Activated T-helper 1 cell treated with anti-CD3 and anti-CD28 coated beads, Interleukin-12 subunit alpha, Interleukin-12 subunit beta, Interleukin-2, Interleukin-4 antibody, amounts not matched to agents 30 ng/mL and 10 ng/mL and 1 ng/mL, durations not matched to agents 14 hours and 24 hours and 36 hours (primary cell): ENCODE measurements at regions of chr3 and their contacts with region 1.

Region 1: DNA sequence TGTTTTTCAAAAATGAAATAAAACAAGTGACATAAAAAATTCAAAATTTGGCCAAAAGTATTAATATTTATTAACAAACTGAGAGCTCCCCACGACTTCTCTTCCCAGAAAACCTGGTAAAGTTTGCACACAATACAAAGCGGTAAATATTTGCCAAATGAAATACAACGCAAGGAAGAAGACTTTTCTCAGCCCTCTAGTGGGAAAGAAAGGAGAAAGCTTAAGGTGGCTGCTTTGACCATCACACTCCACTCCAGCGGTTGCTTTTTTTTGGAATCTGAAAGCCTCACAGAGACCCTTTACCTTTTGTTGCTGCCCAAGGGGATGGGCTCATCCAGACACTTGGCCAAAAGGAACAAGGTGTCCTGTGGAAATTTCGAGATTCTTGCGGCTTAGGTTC is 1.1 kb upstream of the GK5 start:
- DNase-seq: no peak
- H3K4me3 Mint-ChIP-seq: peak overlapping the region; percentile 72
- H3K27ac Mint-ChIP-seq: no peak overlapping the region
- H3K4me1 Mint-ChIP-seq: peaks cover 20% of the 10 kb centered on the region
- H3K27me3 Mint-ChIP-seq: no peaks in the 10 kb centered on the region

Region 2: DNA sequence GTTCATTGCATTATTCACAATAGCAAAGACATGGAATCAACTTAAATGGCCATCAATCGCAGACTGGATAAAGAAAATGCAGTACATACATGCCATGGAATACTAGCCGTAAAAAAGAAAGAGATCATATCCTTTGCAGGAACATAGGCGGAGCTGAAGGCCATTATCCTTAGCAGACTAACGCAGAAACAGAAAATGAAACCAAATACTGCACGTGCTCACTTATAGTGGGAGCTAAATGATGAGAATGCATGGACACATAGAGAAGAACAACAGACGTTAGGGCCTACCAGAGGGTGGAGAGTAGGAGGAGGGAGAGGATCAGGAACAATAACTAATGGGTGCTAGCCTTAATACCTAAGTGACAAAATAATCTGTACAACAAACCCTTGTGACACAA is 681.8 kb before region 1 on chr3:
- intact Hi-C with region 1: no loop called
- DNase-seq: peak; percentile 6
- H3K4me3 Mint-ChIP-seq: peak overlapping the region; percentile 67
- H3K27ac Mint-ChIP-seq: peak overlapping the region; percentile 81
- H3K4me1 Mint-ChIP-seq: peaks cover 60% of the 10 kb centered on the region
- H3K27me3 Mint-ChIP-seq: no peaks in the 10 kb centered on the region

Region 3: GRCh38 chr3:142028243-142028777 is 198.2 kb before region 1 on chr3:
- intact Hi-C with region 1: loop called (anchors 5 kb)
- DNase-seq: peak; percentile 22
- H3K4me3 Mint-ChIP-seq: peak overlapping the region; percentile 87
- H3K27ac Mint-ChIP-seq: peak overlapping the region; percentile 49
- H3K4me1 Mint-ChIP-seq: peaks cover 18% of the 10 kb centered on the region
- H3K27me3 Mint-ChIP-seq: no peaks in the 10 kb centered on the region

Region 4: GRCh38 chr3:142056656-142057330 is 169.7 kb before region 1 on chr3:
- intact Hi-C with region 1: no loop called
- DNase-seq: no peak
- H3K4me3 Mint-ChIP-seq: no peak overlapping the region
- H3K27ac Mint-ChIP-seq: no peak overlapping the region
- H3K4me1 Mint-ChIP-seq: peaks cover 5% of the 10 kb centered on the region
- H3K27me3 Mint-ChIP-seq: no peaks in the 10 kb centered on the region

Region 5: GRCh38 chr3:142270407-142270806 is 43.9 kb after region 1 on chr3:
- intact Hi-C with region 1: loop called (anchors 2 kb)
- DNase-seq: peak; percentile 49
- H3K4me3 Mint-ChIP-seq: peak overlapping the region; percentile 11
- H3K27ac Mint-ChIP-seq: peak overlapping the region; percentile 65
- H3K4me1 Mint-ChIP-seq: peaks cover 20% of the 10 kb centered on the region
- H3K27me3 Mint-ChIP-seq: no peaks in the 10 kb centered on the region

Region 6: DNA sequence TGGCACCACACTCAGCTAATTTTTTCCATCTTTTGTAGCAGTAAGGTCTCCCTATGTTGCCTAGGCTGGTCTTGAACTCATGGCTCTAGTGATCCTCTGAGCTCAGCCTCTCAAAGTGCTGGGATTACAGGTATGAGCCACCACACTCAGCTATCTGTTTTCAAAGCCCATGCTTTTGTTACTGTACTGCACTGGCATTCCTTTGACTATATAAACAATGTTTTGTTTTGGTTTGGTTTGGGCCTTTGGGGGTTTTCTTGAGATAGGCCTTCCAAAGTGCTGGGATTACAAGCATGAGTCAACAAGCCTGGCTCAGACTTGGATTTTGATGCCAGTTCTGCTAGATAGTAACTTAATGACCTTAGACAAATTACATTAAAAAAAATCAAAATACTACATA is 88.6 kb after region 1 on chr3:
- intact Hi-C with region 1: no loop called
- DNase-seq: no peak
- H3K4me3 Mint-ChIP-seq: no peak overlapping the region
- H3K27ac Mint-ChIP-seq: no peak overlapping the region
- H3K4me1 Mint-ChIP-seq: no peaks in the 10 kb centered on the region
- H3K27me3 Mint-ChIP-seq: no peaks in the 10 kb centered on the region

Region 7: GRCh38 chr3:142723968-142724681 is 497.6 kb after region 1 on chr3 and contains the start of gene TRPC1:
- intact Hi-C with region 1: loop called (anchors 10 kb)
- DNase-seq: peak; percentile 73
- H3K4me3 Mint-ChIP-seq: peak within 1 kb of the TSS; percentile 86
- H3K27ac Mint-ChIP-seq: peak within 1 kb of the TSS; percentile 83
- H3K4me1 Mint-ChIP-seq: peaks cover 4% of the 10 kb centered on the region
- H3K27me3 Mint-ChIP-seq: peaks cover 50% of the 10 kb centered on the region
- total RNA-seq, gene TRPC1: 0.66 and 1.1 TPM in 2 replicates